HEK293 (cell line): ENCODE measurements at regions of chr21 and their contacts with region 1.

Region 1: DNA sequence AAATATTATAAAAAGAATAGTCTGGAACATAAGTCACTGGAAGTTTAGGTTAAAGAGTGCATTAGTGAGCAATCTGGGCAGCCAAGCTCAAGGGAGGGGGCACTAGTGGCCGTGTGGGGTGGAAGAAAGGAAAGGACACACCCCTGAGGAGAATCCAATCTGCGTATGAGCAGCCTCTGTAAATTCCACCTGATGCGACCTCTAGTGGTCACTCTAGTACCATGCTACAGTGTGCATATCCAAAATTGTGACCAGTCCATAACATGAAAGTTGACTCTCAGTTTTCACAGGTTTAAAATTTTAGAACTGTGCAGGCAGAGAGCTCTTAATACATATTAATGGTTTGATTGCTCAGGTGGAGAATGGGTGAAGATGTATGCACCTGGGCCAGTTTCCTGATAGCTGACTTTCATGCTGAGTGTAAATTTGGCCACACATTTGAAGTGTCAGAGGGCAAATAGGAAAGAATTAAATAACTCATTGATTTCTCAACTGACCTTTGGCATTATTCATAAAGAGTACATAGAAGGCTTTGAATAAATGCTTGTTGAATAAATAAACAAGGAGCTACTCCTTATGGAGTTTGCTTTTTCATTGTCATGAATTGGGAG is 105.9 kb upstream of the C21orf91 start:
- H3K4me3 ChIP-seq: no peak overlapping the region
- H3K27ac ChIP-seq: no peak overlapping the region
- H3K4me1 ChIP-seq: no peaks in the 10 kb centered on the region
- CTCF ChIP-seq: no peak

Region 2: DNA sequence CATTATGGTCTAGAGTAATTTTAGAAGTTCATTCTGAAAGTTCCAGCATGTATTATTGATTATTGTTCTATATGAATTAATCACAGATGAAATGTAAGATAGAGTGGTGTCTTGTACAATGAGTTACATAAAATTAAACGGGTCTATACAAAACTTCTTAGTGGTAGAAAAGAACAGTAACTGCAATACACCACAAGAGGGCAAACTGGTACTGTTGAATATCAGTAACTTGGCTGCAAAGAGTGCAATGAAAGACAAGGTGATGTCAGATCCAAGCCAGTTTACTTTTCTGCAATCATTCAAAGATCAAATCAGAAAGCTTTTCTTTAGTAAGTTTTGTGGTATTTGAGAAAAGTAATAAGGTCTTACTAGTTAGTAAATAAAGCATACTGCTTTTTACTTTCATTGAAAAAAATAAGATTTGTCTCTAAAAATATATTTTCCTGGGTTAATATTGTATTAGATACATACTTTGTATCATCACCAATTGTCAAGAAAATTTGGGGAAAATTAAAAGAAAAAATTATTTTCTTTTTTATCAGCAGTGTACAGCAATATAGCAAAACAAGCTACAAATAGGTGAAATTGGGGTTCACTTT is 246.0 kb before region 1 on chr21:
- CTCF ChIA-PET with region 1: interaction called, 84 read pairs
- POLR2A ChIA-PET with region 1: no interaction called
- H3K4me3 ChIP-seq: no peak overlapping the region
- H3K27ac ChIP-seq: no peak overlapping the region
- H3K4me1 ChIP-seq: no peaks in the 10 kb centered on the region
- CTCF ChIP-seq: no peak

Region 3: DNA sequence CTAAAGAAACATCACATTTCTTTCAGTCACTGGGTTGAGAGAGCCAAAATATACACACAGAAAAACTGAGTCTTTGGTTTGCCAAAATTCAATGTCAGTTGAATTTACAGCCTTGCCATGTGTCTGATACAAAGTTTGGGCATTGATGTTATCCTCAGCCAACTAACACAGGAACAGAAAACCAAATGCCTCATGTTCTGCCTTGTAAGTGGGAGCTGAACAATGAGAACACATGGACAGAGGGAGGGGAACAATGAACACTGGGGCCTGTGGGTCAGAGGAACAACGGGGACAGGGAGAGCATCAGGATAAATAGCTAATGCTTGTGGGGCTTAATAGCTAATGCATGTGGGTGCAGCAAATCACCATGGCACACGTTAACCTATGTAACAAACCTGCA is 66.4 kb before region 1 on chr21:
- CTCF ChIA-PET with region 1: interaction called, 12 read pairs
- POLR2A ChIA-PET with region 1: no interaction called
- H3K4me3 ChIP-seq: no peak overlapping the region
- H3K27ac ChIP-seq: no peak overlapping the region
- H3K4me1 ChIP-seq: no peaks in the 10 kb centered on the region
- CTCF ChIP-seq: no peak

Region 4: DNA sequence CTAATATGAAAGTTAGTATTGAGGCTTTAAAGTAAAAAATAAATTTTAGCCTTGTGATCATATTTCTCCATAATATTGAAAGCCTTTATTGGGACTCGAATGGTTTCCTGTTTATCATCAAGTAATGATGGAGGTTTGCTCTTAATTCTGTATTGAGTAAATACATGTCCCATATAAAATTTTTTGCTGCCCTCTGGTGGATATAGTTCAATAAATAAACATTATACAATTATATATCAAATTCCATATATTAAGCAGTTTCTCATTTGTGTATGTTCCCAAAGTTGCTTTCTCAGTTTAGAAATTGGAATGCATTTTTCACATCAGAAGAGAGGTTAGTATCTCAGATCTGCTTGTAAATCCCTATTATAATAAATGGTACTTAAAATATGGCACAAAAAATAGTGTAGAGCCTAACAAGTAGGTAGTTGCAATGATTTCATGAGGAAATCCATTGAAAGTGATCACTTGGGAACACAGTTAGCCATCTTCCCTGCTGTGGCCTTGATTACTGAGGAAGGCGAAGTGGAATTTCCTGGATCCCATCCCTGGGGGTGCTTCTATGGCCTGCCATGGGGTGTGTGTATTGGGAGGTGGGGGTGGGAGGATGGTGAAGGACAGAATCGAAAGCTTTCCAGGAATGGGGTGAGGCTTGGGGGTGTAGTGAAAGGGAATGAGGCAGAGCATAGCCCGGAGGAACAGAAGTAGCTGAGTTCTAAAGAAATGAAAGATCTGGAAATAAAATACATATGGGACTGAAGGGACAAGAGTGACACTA is 21.9 kb before region 1 on chr21:
- CTCF ChIA-PET with region 1: interaction called, 15 read pairs
- POLR2A ChIA-PET with region 1: no interaction called
- H3K4me3 ChIP-seq: no peak overlapping the region
- H3K27ac ChIP-seq: no peak overlapping the region
- H3K4me1 ChIP-seq: no peaks in the 10 kb centered on the region
- CTCF ChIP-seq: no peak

Region 5: DNA sequence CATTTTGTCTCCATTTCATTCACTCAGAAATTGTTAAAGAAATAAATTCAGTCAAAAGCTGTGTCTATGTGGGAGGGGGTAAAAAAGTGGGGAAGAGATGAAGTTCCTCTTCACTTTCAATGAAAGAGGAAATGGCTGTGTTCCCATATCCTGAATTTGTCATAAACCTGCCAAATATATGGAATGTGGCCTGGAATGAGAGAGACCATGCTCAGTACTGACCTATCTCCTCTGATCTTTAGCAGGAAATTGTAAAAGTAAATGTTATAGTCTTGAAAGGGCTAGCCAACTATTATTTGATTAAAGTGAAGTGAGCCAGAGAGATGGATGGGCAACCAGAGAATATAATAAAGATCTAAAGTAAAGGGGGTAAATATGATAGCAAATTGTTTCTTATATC is 24.3 kb after region 1 on chr21:
- CTCF ChIA-PET with region 1: interaction called, 16 read pairs
- POLR2A ChIA-PET with region 1: no interaction called
- H3K4me3 ChIP-seq: no peak overlapping the region
- H3K27ac ChIP-seq: no peak overlapping the region
- H3K4me1 ChIP-seq: no peaks in the 10 kb centered on the region
- CTCF ChIP-seq: no peak

Region 6: GRCh38 chr21:18041012-18041411 is 115.9 kb after region 1 on chr21:
- CTCF ChIA-PET with region 1: interaction called, 23 read pairs
- POLR2A ChIA-PET with region 1: no interaction called
- H3K4me3 ChIP-seq: no peak overlapping the region
- H3K27ac ChIP-seq: no peak overlapping the region
- H3K4me1 ChIP-seq: no peaks in the 10 kb centered on the region
- CTCF ChIP-seq: no peak